ENCODE measurements at regions of chr3 and their contacts with region 1.

Region 1: DNA sequence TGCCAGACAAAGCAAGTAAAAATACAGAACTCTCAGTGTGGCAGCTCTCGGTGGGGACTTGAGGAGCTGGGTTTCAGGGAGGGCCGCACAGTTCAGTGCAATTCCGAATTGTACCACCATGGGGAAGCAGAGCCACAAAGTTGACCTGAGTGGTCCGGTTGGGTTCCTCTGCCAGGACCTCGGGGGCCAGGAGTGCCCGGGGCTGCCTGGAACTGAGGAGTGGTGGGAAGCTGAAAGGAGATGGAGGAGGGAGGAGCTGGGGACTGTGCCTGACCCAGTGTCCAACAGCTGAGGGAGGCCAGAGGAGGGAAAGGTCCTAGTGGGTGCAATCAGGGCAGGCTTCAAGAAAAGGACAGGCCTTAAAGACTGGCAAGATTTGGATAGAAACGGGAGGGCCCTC is 32.2 kb upstream of the TRH start:
- DNase-seq: peak; percentile 53 to 54 (median 53)
- ATAC-seq: peak; percentile 93
- H3K4me3 ChIP-seq: no peak overlapping the region
- H3K27ac ChIP-seq: no peak overlapping the region
- H3K4me1 ChIP-seq: peaks cover 0 to 5% of the 10 kb centered on the region in 2 experiments; a peak in 2 of 5 replicates
- H3K27me3 ChIP-seq: peaks cover 18 to 29% of the 10 kb centered on the region in 2 experiments; a peak in 4 of 5 replicates
- CTCF ChIP-seq: peak; percentile 72 to 80 (median 74)
- EP300 ChIP-seq: no peak
- POLR2A ChIP-seq: no peak
- RAD21 ChIP-seq: peak; percentile 69 to 83

Region 2: GRCh38 chr3:129994883-129995559 is 52.7 kb after region 1 on chr3:
- CTCF ChIA-PET with region 1: no interaction called
- POLR2A ChIA-PET with region 1: no interaction called
- in situ Hi-C with region 1: no loop called
- intact Hi-C with region 1: loop called (anchors 5 kb)
- DNase-seq: no peak
- ATAC-seq: no peak
- H3K4me3 ChIP-seq: no peak overlapping the region
- H3K27ac ChIP-seq: no peak overlapping the region
- H3K4me1 ChIP-seq: no peaks in the 10 kb centered on the region
- H3K27me3 ChIP-seq: peaks cover 10 to 40% of the 10 kb centered on the region in 2 experiments
- CTCF ChIP-seq: no peak
- EP300 ChIP-seq: no peak
- POLR2A ChIP-seq: no peak
- RAD21 ChIP-seq: no peak

Region 3: DNA sequence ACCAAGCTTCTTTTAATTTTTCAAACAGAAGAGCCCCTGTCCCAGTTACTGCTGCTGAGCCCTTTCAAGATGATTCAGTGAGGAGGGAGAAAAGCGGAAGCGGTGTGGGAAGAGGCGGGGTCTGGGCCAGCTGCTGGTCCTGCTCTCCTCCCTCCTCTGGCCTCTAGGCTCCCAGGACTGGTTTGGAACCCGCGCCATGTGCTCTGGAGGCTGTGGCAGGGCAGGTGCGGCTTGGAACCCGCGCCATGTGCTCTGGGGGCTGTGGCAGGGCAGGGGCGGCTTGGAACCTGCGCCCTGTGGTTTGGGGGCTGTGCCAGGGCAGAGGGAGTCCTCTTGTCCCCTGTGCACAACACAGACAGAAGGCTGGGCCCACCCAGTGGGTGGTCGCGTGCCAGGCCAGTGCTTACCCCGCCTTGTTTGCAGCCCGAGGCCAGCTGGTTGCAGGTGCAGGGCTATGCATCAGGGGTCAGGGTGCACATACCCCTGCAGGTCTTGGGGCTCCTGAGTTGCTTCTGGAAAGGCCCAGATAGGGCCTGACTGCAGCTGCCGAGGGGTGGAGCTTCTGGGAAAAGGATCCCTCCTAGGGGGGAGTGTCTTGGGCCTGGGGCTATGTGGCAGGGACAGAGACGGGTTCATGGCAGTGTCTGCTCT is 151.6 kb after region 1 on chr3:
- CTCF ChIA-PET with region 1: interaction called, 8 read pairs
- POLR2A ChIA-PET with region 1: no interaction called
- in situ Hi-C with region 1: loop called (anchors 5 kb)
- intact Hi-C with region 1: loop called (anchors 5 kb)
- DNase-seq: peak; percentile 28 to 64 (median 48)
- ATAC-seq: no peak
- H3K4me3 ChIP-seq: no peak overlapping the region
- H3K27ac ChIP-seq: no peak overlapping the region
- H3K4me1 ChIP-seq: peaks cover 0 to 11% of the 10 kb centered on the region in 2 experiments; a peak in 4 of 5 replicates
- H3K27me3 ChIP-seq: no peaks in the 10 kb centered on the region
- CTCF ChIP-seq: no peak
- EP300 ChIP-seq: no peak
- POLR2A ChIP-seq: no peak
- RAD21 ChIP-seq: no peak